ENCODE measurements at regions of chr19 and their contacts with region 1.

Region 1: GRCh38 chr19:54297760-54298305 is 15.1 kb downstream of the LILRA5 start:
- DNase-seq: peak in 2 of 4 experiments; percentile 17 to 29
- ATAC-seq: peak; percentile 74
- H3K4me3 ChIP-seq: no peak overlapping the region
- H3K27ac ChIP-seq: no peak overlapping the region
- H3K4me1 ChIP-seq: no peaks in the 10 kb centered on the region
- H3K27me3 ChIP-seq: peaks cover 4 to 32% of the 10 kb centered on the region in 2 experiments; a peak in 2 of 5 replicates
- CTCF ChIP-seq: peak; percentile 33 to 46 (median 37); a peak in 4 of 6 replicates
- EP300 ChIP-seq: no peak
- POLR2A ChIP-seq: no peak
- RAD21 ChIP-seq: peak in 1 of 2 experiments; percentile 43; a peak in 2 of 4 replicates

Region 2: DNA sequence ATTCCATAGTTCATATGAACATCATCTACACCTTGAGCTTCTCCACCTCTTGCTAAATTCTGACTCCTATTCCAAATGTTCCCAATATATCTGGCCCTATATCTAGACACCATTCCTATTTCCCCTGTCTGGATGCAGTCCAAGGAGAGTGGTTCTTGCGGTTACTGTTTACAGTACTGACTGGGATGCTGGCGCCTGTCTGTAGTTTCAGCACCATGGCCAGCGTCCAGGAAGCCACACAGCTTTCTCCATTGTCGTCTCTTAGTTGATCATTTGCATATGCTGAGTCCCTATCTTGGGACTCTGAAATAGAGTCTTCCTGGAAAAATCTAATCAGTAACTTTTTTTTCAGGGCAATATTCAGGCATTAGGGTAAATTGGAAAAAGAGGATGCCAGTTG is 219.7 kb after region 1 on chr19:
- CTCF ChIA-PET with region 1: no interaction called
- POLR2A ChIA-PET with region 1: no interaction called
- in situ Hi-C with region 1: no loop called
- intact Hi-C with region 1: no loop called
- DNase-seq: peak; percentile 73 to 82 (median 78)
- ATAC-seq: peak; percentile 93
- H3K4me3 ChIP-seq: no peak overlapping the region
- H3K27ac ChIP-seq: no peak overlapping the region
- H3K4me1 ChIP-seq: peaks cover 3 to 15% of the 10 kb centered on the region in 2 experiments; a peak in 3 of 5 replicates
- H3K27me3 ChIP-seq: peaks cover 0 to 24% of the 10 kb centered on the region in 2 experiments; a peak in 3 of 5 replicates
- CTCF ChIP-seq: no peak
- EP300 ChIP-seq: no peak
- POLR2A ChIP-seq: no peak
- RAD21 ChIP-seq: no peak

Region 3: GRCh38 chr19:54576411-54576976 is 278.7 kb after region 1 on chr19:
- CTCF ChIA-PET with region 1: no interaction called
- POLR2A ChIA-PET with region 1: interaction called, 3 read pairs
- in situ Hi-C with region 1: loop called (anchors 5 kb)
- intact Hi-C with region 1: no loop called
- DNase-seq: no peak
- ATAC-seq: no peak
- H3K4me3 ChIP-seq: no peak overlapping the region
- H3K27ac ChIP-seq: no peak overlapping the region
- H3K4me1 ChIP-seq: peaks cover 11 to 16% of the 10 kb centered on the region in 2 experiments
- H3K27me3 ChIP-seq: 0 out of 5 replicates have a peak, but pooled peaks cover 0 to 7% of the 10 kb centered on the region in 2 experiments
- CTCF ChIP-seq: no peak
- EP300 ChIP-seq: no peak
- POLR2A ChIP-seq: no peak
- RAD21 ChIP-seq: no peak